IMR-90 (cell line): ENCODE measurements at regions of chr7 and their contacts with region 1.

Region 1: GRCh38 chr7:26356929-26357798 is 65.5 kb downstream of the SNX10 start:
- DNase-seq: no peak
- ATAC-seq: no peak
- H3K4me3 ChIP-seq: no peak overlapping the region
- H3K27ac ChIP-seq: no peak overlapping the region
- H3K4me1 ChIP-seq: no peaks in the 10 kb centered on the region
- H3K27me3 ChIP-seq: peaks cover 3% of the 10 kb centered on the region; the same call in 1 of the 2 replicates
- CTCF ChIP-seq: no peak
- POLR2A ChIP-seq: no peak
- RAD21 ChIP-seq: no peak

Region 2: GRCh38 chr7:25913598-25914224 is 443.5 kb before region 1 on chr7:
- CTCF ChIA-PET with region 1: no interaction called
- POLR2A ChIA-PET with region 1: no interaction called
- dilution Hi-C with region 1: no loop called
- in situ Hi-C with region 1: no loop called
- intact Hi-C with region 1: loop called (anchors 5 kb)
- DNase-seq: no peak
- ATAC-seq: no peak
- H3K4me3 ChIP-seq: no peak overlapping the region
- H3K27ac ChIP-seq: no peak overlapping the region
- H3K4me1 ChIP-seq: no peaks in the 10 kb centered on the region
- H3K27me3 ChIP-seq: no peaks in the 10 kb centered on the region; the same call in 1 of the 2 replicates
- CTCF ChIP-seq: no peak
- POLR2A ChIP-seq: no peak
- RAD21 ChIP-seq: no peak

Region 3: GRCh38 chr7:26105236-26105635 is 251.9 kb before region 1 on chr7:
- CTCF ChIA-PET with region 1: no interaction called
- POLR2A ChIA-PET with region 1: no interaction called
- dilution Hi-C with region 1: no loop called
- in situ Hi-C with region 1: no loop called
- intact Hi-C with region 1: loop called (anchors 5 kb)
- DNase-seq: no peak
- ATAC-seq: no peak
- H3K4me3 ChIP-seq: no peak overlapping the region
- H3K27ac ChIP-seq: no peak overlapping the region
- H3K4me1 ChIP-seq: no peaks in the 10 kb centered on the region
- H3K27me3 ChIP-seq: peaks cover 11% of the 10 kb centered on the region
- CTCF ChIP-seq: no peak
- POLR2A ChIP-seq: no peak
- RAD21 ChIP-seq: no peak

Region 4: DNA sequence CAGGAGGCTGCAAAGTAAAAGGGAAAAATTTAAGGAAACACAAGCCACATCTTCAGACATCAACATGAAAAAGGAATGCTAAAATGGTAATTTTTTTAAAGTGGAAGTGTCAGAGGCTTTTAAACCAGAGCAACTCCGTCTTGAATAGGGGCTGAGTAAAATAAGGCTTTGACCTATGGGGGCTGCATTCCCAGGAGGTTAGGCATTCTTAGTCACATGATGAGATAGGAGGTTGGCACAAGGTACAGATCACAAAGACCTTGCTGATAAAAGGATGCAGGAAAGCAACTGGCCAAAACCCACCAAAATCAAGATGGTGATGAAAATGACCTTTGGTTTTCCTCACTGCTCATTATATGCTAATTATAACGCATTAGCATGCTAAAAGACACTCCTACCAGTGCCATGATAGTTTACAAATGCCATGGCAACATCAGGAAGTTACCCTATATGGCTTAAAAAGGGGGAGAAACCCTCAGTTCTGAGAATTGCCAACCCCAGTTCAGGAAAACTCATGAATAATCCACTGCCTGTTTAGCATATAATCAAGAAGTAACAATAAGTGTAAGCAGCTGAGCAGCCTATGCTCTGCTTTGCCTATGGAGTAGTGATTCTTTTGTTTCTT is 378.9 kb after region 1 on chr7:
- CTCF ChIA-PET with region 1: no interaction called
- POLR2A ChIA-PET with region 1: no interaction called
- dilution Hi-C with region 1: no loop called
- in situ Hi-C with region 1: no loop called
- intact Hi-C with region 1: no loop called
- DNase-seq: no peak
- ATAC-seq: no peak
- H3K4me3 ChIP-seq: no peak overlapping the region
- H3K27ac ChIP-seq: no peak overlapping the region
- H3K4me1 ChIP-seq: no peaks in the 10 kb centered on the region
- H3K27me3 ChIP-seq: no peaks in the 10 kb centered on the region
- CTCF ChIP-seq: no peak
- POLR2A ChIP-seq: no peak
- RAD21 ChIP-seq: no peak